ENCODE measurements at regions of chr16 and their contacts with region 1.

Region 1: GRCh38 chr16:73847084-73847483 is 449.5 kb upstream of the PSMD7 start:
- DNase-seq: no peak
- H3K27ac ChIP-seq: no peak overlapping the region
- CTCF ChIP-seq: no peak

Region 2: GRCh38 chr16:73186752-73187601 is 660.1 kb before region 1 on chr16:
- CTCF ChIA-PET with region 1: interaction called, 13 read pairs
- POLR2A ChIA-PET with region 1: no interaction called
- DNase-seq: no peak
- H3K27ac ChIP-seq: no peak overlapping the region
- CTCF ChIP-seq: no peak

Measured in RWPE1 (cell line).